ENCODE measurements at regions of chr12 and their contacts with region 1.

Region 1: GRCh38 chr12:27523642-27524493 is at the start of gene PPFIBP1:
- DNase-seq: peak; percentile 99
- H3K4me3 Mint-ChIP-seq: peak within 1 kb of the TSS; percentile 94
- H3K27ac Mint-ChIP-seq: peak within 1 kb of the TSS; percentile 85
- H3K4me1 Mint-ChIP-seq: peaks cover 24% of the 10 kb centered on the region
- H3K27me3 Mint-ChIP-seq: peaks cover 1% of the 10 kb centered on the region
- total RNA-seq, gene PPFIBP1: 43.4 to 43.6 TPM

Region 2: GRCh38 chr12:27243804-27244683 is 279.8 kb before region 1 on chr12 and contains the start of gene STK38L:
- CTCF ChIA-PET with region 1: no interaction called
- intact Hi-C with region 1: loop called (anchors 5 kb)
- DNase-seq: peak; percentile 98
- H3K4me3 Mint-ChIP-seq: peak within 1 kb of the TSS; percentile 98
- H3K27ac Mint-ChIP-seq: peak within 1 kb of the TSS; percentile 91
- H3K4me1 Mint-ChIP-seq: peaks cover 47% of the 10 kb centered on the region
- H3K27me3 Mint-ChIP-seq: no peaks in the 10 kb centered on the region
- total RNA-seq, gene STK38L: 21.3 to 21.4 TPM

Region 3: DNA sequence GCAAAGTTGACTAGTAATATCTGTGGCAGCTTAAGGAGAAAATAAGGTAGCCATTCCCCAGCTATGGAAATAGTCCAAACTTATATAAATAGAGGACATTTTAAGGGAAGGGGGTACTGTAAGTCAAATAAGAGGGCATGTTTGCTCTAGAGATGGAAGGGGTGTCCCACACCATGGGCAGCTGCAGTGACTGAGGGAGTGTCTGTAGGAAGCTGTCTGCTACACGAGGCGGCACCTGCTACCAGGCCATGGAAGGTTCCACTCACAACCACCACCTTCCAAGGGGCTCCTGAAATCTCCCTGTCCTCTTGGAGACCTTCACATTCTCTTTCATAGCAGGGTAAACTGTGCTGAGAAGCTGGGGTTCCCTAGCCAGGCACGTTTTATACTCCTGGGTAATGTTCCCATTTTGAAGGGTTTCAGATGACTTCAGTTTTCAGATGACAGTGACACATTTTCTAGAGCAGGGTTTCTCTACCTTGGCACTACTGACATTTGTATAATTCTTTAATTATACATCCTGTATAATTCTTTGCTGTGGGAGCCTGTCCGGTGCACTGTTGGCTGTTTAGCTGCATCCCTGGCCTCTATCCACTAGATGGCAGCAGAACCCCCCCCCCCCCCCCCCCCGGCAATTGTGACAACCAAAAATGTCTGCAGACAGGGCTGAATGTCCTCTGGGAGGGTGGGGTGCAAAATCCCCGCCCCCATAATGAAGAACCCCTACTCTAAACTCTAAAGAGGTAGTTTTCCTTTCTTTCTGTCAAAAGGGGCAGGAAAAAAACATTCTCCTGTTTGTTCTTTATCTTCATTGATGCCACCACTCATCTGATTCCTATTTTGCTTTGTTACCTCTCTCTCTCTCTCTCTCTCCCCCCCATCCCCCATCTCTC is 88.9 kb before region 1 on chr12:
- CTCF ChIA-PET with region 1: interaction called, 10 read pairs
- intact Hi-C with region 1: loop called (anchors 5 kb)
- DNase-seq: peak; percentile 37
- H3K4me3 Mint-ChIP-seq: no peak overlapping the region
- H3K27ac Mint-ChIP-seq: no peak overlapping the region
- H3K4me1 Mint-ChIP-seq: peaks cover 17% of the 10 kb centered on the region
- H3K27me3 Mint-ChIP-seq: peaks cover 2% of the 10 kb centered on the region

Region 4: GRCh38 chr12:27488479-27488878 is 35.4 kb before region 1 on chr12:
- CTCF ChIA-PET with region 1: no interaction called
- intact Hi-C with region 1: no loop called
- DNase-seq: no peak
- H3K4me3 Mint-ChIP-seq: no peak overlapping the region
- H3K27ac Mint-ChIP-seq: no peak overlapping the region
- H3K4me1 Mint-ChIP-seq: no peaks in the 10 kb centered on the region
- H3K27me3 Mint-ChIP-seq: peaks cover 9% of the 10 kb centered on the region

Region 5: DNA sequence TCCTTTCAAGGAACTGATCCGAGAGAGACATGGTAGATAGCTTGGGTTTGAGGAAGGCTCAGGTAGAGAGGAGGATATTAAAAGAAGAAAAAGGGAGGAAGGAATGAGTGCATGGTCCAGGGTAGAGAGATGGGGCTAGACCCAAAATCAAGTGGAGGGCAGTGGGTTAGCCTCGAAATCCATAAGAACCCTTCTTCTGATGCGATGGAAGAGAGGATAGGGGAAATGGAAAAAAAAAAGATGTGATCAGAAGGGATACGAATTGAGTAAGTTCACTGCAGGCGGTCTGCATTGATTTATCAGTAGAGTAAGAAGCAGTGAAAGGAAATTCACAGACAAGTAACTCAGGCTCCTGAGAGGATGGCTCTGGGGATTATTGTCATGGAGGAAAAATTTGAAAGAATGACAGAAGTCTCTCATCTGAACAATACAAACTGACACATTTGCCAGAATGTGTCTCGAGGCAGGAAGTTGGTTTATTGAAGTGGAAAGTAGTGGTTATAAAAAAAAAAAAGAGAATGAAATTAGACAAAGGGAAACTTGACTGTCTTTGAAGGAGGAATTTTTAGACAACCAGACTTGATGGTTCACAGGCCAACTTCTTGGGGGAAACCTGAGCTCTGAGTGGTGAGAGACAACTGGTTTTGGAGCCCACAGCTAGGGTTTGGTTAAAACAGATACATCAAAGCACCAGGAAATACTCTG is 10.3 kb after region 1 on chr12:
- CTCF ChIA-PET with region 1: interaction called, 3 read pairs
- intact Hi-C with region 1: loop called (anchors 1 kb)
- DNase-seq: peak; percentile 71
- H3K4me3 Mint-ChIP-seq: peak overlapping the region; percentile 7
- H3K27ac Mint-ChIP-seq: peak overlapping the region; percentile 71
- H3K4me1 Mint-ChIP-seq: peaks cover 50% of the 10 kb centered on the region
- H3K27me3 Mint-ChIP-seq: no peaks in the 10 kb centered on the region

Region 6: DNA sequence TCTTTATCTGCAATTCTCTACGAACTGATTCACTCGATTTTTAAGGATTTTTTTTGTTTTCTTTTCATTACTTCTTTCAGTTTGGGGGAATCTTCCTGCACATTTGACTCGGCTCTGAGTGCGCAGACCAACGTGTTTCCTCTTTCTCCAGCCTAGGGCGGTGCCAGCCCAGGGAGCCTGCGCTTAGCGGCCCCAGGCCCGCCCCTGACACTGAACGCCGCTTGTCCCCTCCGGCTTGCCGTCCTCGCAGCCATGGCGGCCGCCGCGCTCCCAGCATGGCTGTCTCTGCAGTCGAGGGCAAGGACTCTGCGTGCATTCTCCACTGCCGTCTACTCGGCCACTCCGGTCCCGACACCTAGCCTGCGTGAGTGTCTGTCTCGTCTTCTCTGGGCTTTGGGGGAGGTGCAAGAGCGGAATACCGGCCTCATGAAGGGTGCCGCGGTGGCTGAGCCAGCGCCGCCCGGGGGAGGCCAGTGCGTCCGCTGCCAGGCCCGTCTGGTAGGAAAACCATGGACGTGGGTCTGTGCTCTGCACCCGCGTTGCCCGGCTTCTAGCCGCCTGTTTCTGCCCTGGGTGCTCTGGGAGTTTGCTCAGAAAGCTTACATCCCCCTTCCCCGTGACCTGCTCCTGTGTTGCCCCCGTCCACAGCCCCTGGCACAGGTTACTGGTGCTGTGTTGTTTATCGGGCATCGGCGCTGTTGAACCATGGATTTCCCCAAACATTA is 186.9 kb after region 1 on chr12 and contains the start of gene MRPS35:
- CTCF ChIA-PET with region 1: no interaction called
- intact Hi-C with region 1: loop called (anchors 2 kb)
- DNase-seq: peak; percentile 95
- H3K4me3 Mint-ChIP-seq: peak within 1 kb of the TSS; percentile 98
- H3K27ac Mint-ChIP-seq: peak within 1 kb of the TSS; percentile 92
- H3K4me1 Mint-ChIP-seq: peaks cover 18% of the 10 kb centered on the region
- H3K27me3 Mint-ChIP-seq: no peaks in the 10 kb centered on the region
- total RNA-seq, gene MRPS35: 53.1 to 57.6 TPM

Region 7: DNA sequence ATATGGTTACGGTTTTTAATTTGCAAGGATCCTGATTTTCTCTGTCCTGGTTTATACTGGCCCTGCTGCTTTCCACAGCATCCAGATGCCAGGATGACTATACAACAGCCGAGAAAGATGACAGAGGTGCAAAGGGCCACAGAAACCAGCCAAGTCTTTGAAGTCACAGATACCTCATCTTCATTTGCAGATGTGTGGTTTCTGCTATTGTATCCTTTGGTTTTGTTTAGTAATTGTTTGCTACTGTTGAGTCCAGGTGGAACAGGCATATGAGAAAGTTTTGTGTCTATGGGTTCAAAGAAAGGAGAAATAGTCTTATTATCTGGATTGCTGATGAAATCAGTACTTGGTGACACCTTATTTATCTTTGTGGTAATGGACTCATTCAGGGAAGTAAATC is 238.9 kb after region 1 on chr12:
- CTCF ChIA-PET with region 1: no interaction called
- intact Hi-C with region 1: no loop called
- DNase-seq: peak; percentile 41
- H3K4me3 Mint-ChIP-seq: no peak overlapping the region
- H3K27ac Mint-ChIP-seq: no peak overlapping the region
- H3K4me1 Mint-ChIP-seq: peaks cover 6% of the 10 kb centered on the region
- H3K27me3 Mint-ChIP-seq: no peaks in the 10 kb centered on the region

Measured in activated naive CD4-positive, alpha-beta T cell treated with anti-CD3 and anti-CD28 coated beads for 36 hours (primary cell).